Right ventricle myocardium inferior (tissue), 1 donor: ENCODE measurements at regions of chr10 and their contacts with region 1.

Region 1: DNA sequence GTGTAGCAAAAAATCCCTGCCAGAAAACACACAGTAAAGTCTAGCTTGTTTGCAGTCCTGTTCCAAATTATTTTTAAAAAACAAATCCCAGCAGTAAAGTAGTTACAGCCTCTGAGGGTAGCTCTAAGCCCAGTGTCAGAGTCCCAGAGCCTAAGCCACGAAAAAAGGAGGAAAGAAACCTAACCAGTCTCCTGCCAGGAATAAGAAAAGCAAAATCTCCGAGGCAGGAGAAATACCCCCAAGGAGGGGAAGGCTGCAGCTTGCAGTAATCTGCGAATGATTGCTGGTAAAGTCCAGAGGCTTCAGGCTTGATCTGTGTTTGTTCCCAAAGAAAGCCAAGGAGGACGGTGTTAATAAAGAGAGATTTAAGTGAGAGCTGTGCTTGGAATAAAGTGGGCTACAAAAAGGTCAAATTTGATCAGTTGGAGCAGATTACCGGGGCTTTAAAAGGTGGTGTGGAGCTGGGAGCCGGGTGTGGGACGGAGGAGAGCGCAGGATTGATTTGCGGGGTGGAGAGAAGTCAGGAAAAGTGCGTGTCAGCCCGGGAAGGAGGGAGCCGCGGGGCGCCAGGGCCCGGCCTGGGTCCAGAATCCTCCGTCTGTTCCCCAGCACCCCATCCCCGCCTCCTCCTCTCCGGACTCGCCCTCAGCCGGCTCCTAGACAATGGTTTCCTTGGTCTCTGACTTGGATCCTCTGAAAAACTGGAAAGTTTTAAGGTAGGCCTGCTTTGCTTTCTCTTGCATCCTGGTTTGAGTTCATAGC is 219.4 kb upstream of the CELF2 start:
- DNase-seq: no peak
- ATAC-seq: peak; percentile 75

Region 2: DNA sequence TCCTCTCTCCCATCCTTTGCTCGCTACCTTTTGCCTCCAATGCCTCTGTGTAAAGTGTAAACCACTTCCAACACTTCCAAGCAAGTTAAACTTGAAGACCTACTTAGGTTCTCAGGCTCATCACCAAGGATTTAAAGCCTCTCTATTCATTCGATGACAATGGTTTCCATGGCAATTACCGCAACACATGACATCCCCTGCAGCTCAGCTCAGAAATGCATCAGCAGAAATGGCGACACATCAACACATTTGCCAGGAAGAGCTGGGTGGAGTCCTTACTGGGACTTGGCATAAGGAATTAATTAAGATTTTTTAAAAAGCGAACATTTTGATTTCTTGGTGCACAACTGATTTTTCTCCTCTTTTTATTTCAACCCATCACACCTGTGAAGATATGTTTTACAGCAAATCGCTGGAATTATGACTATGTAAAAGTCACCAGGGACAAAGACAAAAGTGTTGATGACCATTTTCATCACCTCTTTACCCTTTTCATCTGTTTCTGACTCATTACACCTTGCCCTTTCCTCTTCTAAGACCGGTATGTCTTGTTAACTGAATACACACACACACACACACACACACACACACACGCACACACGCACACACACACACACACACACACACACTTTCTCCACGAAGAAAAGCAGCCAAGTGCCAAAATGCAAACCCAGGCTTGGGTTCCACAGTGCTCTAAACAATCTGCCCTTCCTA is 234.0 kb before region 1 on chr10:
- intact Hi-C with region 1: no loop called
- DNase-seq: no peak
- ATAC-seq: no peak

Region 3: GRCh38 chr10:10584161-10584560 is 214.1 kb before region 1 on chr10:
- intact Hi-C with region 1: no loop called
- DNase-seq: no peak
- ATAC-seq: no peak

Region 4: GRCh38 chr10:10726101-10726500 is 72.2 kb before region 1 on chr10:
- intact Hi-C with region 1: loop called (anchors 5 kb)
- DNase-seq: no peak
- ATAC-seq: no peak

Region 5: GRCh38 chr10:10831085-10831484 is 32.8 kb after region 1 on chr10:
- intact Hi-C with region 1: no loop called
- DNase-seq: no peak
- ATAC-seq: peak; percentile 44

Region 6: GRCh38 chr10:10872035-10872673 is 73.9 kb after region 1 on chr10:
- intact Hi-C with region 1: loop called (anchors 5 kb)
- DNase-seq: no peak
- ATAC-seq: peak; percentile 95